ENCODE measurements at regions of chr14 and their contacts with region 1.

Region 1: GRCh38 chr14:97978341-97978740 is 1181.2 kb downstream of the VRK1 start:
- DNase-seq: peak; percentile 33 to 83 (median 72)
- ATAC-seq: peak; percentile 84
- H3K4me3 ChIP-seq: peak overlapping the region; percentile 91
- H3K4me3 Mint-ChIP-seq: peak overlapping the region; percentile 85 to 99 (median 93)
- H3K27ac ChIP-seq: peak overlapping the region; percentile 85
- H3K27ac Mint-ChIP-seq: peak overlapping the region; percentile 68 to 99 (median 92)
- H3K4me1 ChIP-seq: peaks cover 25 to 40% of the 10 kb centered on the region in 2 donors
- H3K4me1 Mint-ChIP-seq: peaks cover 32 to 64% (median 50%) of the 10 kb centered on the region in 7 donors
- H3K27me3 ChIP-seq: no peaks in the 10 kb centered on the region
- H3K27me3 Mint-ChIP-seq: no peaks in the 10 kb centered on the region

Region 2: DNA sequence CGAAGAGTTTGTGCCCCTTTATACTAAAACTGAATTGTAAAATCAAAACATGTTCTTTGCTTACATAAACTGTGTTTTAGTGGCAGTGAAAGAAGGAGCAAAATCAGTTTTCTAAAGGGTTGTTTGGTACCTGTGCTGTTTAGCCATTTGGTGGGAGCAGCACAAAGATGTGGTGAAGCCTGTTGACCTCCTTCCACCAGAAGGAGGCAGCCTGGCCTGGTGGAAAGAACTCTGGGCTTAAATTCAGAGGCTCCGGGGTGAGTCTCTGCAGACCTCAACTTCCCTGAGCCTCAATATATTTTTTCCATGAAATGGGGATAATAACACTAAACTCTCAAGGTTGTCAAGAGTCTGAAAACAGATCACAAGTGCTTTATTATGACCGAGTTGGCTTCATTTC is 678.7 kb before region 1 on chr14:
- CTCF ChIA-PET with region 1: interaction called, 11 read pairs
- POLR2A ChIA-PET with region 1: interaction called, 9 read pairs
- intact Hi-C with region 1: loop called (anchors 5 kb)
- DNase-seq: peak in 5 of 9 donors; percentile 16 to 31 (median 22)
- ATAC-seq: peak; percentile 54
- H3K4me3 ChIP-seq: no peak overlapping the region
- H3K4me3 Mint-ChIP-seq: no peak overlapping the region
- H3K27ac ChIP-seq: no peak overlapping the region
- H3K27ac Mint-ChIP-seq: peak overlapping the region in 2 of 9 donors; percentile 28 to 48
- H3K4me1 ChIP-seq: peaks cover 0 to 4% of the 10 kb centered on the region in 2 donors
- H3K4me1 Mint-ChIP-seq: peaks cover 4 to 23% (median 12%) of the 10 kb centered on the region in 7 donors
- H3K27me3 ChIP-seq: no peaks in the 10 kb centered on the region
- H3K27me3 Mint-ChIP-seq: peaks cover 0 to 30% (median 0%) of the 10 kb centered on the region in 5 donors

Region 3: DNA sequence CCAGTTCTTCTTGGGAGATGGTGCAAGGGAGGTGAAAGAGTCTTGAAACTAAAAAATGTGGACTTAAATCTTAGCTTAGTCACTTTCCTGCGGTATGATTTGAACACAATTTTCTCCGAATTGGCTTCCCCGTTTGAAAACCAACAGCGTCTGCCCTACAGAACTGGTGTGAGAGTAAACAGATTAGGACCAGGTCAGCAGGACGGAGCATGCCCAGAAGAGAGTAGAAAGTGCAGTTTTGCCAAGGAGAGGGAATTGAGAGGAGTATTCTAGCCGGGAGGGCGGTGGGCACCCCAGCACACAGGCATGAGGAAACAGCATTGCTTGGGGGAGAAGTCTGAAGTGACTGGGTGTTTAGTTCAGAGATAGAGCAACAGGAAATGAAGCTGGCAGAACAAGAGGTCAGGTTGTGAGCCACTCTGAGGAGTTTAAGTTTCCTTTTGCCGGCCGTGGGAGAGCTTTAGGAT is 254.0 kb before region 1 on chr14:
- CTCF ChIA-PET with region 1: interaction called, 4 read pairs
- POLR2A ChIA-PET with region 1: interaction called, 12 read pairs
- intact Hi-C with region 1: loop called (anchors 1 to 5 kb)
- DNase-seq: peak in 8 of 9 donors; percentile 38 to 67 (median 59)
- ATAC-seq: peak; percentile 77
- H3K4me3 ChIP-seq: peak overlapping the region; percentile 57
- H3K4me3 Mint-ChIP-seq: peak overlapping the region; percentile 78 to 92 (median 84)
- H3K27ac ChIP-seq: peak overlapping the region; percentile 80
- H3K27ac Mint-ChIP-seq: peak overlapping the region; percentile 92 to 99 (median 97)
- H3K4me1 ChIP-seq: peaks cover 28 to 72% of the 10 kb centered on the region in 2 donors
- H3K4me1 Mint-ChIP-seq: peaks cover 51 to 94% (median 86%) of the 10 kb centered on the region in 7 donors
- H3K27me3 ChIP-seq: no peaks in the 10 kb centered on the region
- H3K27me3 Mint-ChIP-seq: no peaks in the 10 kb centered on the region

Region 4: GRCh38 chr14:98018628-98019027 is 40.3 kb after region 1 on chr14:
- CTCF ChIA-PET with region 1: interaction called, 4 read pairs
- POLR2A ChIA-PET with region 1: interaction called, 21 read pairs
- intact Hi-C with region 1: loop called in 1 of 2 experiments (anchors 1 kb)
- DNase-seq: peak in 7 of 9 donors; percentile 62 to 81 (median 74)
- ATAC-seq: peak; percentile 75
- H3K4me3 ChIP-seq: no peak overlapping the region
- H3K4me3 Mint-ChIP-seq: peak overlapping the region in 8 of 10 donors; percentile 9 to 65 (median 54)
- H3K27ac ChIP-seq: no peak overlapping the region
- H3K27ac Mint-ChIP-seq: peak overlapping the region in 8 of 9 donors; percentile 36 to 91 (median 79)
- H3K4me1 ChIP-seq: peaks cover 0 to 70% of the 10 kb centered on the region in 2 donors
- H3K4me1 Mint-ChIP-seq: peaks cover 30 to 81% (median 73%) of the 10 kb centered on the region in 7 donors
- H3K27me3 ChIP-seq: no peaks in the 10 kb centered on the region
- H3K27me3 Mint-ChIP-seq: no peaks in the 10 kb centered on the region

Region 5: DNA sequence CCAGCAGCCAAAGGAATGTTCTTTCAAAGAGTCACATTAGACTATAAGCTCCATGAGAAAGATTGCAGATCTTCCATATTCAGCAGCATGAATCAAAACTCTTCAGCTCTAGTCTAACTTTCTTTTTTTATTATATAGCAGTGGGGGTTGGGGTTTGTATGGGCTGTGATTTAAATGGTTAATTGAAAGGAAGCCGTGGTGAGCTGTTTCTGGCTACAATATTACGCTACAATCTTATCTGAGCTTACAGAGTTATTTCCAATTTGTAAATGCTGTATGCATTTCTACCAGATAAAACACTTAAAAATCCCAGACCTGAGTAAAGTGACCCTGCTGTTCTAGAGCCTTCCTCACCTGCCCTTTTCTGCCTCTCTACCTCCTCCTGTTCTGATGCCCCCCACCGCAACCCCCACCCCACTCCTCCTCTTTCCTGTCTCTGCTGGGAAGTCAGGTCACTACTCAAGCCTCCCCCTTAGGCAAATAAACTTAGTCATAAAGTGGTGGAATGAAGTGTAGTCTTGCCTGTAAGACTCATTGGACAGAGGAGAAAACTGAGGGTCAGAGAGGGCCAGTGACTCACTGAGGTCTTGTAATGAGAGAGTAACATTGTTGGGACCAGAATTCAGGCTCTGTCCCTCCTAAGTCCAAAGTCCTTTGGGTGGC is 204.2 kb after region 1 on chr14:
- CTCF ChIA-PET with region 1: interaction called, 3 read pairs
- POLR2A ChIA-PET with region 1: interaction called, 17 read pairs
- intact Hi-C with region 1: loop called in 1 of 2 experiments (anchors 5 kb)
- DNase-seq: peak in 3 of 9 donors; percentile 44 to 58 (median 54)
- ATAC-seq: peak; percentile 28
- H3K4me3 ChIP-seq: peak overlapping the region; percentile 0
- H3K4me3 Mint-ChIP-seq: peak overlapping the region; percentile 46 to 84 (median 68)
- H3K27ac ChIP-seq: peak overlapping the region; percentile 80
- H3K27ac Mint-ChIP-seq: peak overlapping the region; percentile 89 to 100 (median 97)
- H3K4me1 ChIP-seq: peaks cover 75 to 94% of the 10 kb centered on the region in 2 donors
- H3K4me1 Mint-ChIP-seq: peaks cover 52 to 99% (median 95%) of the 10 kb centered on the region in 7 donors
- H3K27me3 ChIP-seq: no peaks in the 10 kb centered on the region
- H3K27me3 Mint-ChIP-seq: no peaks in the 10 kb centered on the region

Region 6: GRCh38 chr14:99192028-99192621 is 1213.8 kb after region 1 on chr14:
- CTCF ChIA-PET with region 1: no interaction called
- POLR2A ChIA-PET with region 1: interaction called, 10 read pairs
- intact Hi-C with region 1: loop called (anchors 2 to 5 kb)
- DNase-seq: peak in 3 of 9 donors; percentile 45 to 64 (median 49)
- ATAC-seq: peak; percentile 28
- H3K4me3 ChIP-seq: peak overlapping the region; percentile 61
- H3K4me3 Mint-ChIP-seq: peak overlapping the region; percentile 85 to 94 (median 90)
- H3K27ac ChIP-seq: peak overlapping the region; percentile 85
- H3K27ac Mint-ChIP-seq: peak overlapping the region; percentile 93 to 100 (median 98)
- H3K4me1 ChIP-seq: peaks cover 84 to 85% of the 10 kb centered on the region in 2 donors
- H3K4me1 Mint-ChIP-seq: peaks cover 55 to 97% (median 93%) of the 10 kb centered on the region in 7 donors
- H3K27me3 ChIP-seq: no peaks in the 10 kb centered on the region
- H3K27me3 Mint-ChIP-seq: no peaks in the 10 kb centered on the region

Measured in naive thymus-derived CD4-positive, alpha-beta T cell (primary cell).